Naive thymus-derived CD4-positive, alpha-beta T cell (primary cell): ENCODE measurements at regions of chr6 and their contacts with region 1.

Region 1: DNA sequence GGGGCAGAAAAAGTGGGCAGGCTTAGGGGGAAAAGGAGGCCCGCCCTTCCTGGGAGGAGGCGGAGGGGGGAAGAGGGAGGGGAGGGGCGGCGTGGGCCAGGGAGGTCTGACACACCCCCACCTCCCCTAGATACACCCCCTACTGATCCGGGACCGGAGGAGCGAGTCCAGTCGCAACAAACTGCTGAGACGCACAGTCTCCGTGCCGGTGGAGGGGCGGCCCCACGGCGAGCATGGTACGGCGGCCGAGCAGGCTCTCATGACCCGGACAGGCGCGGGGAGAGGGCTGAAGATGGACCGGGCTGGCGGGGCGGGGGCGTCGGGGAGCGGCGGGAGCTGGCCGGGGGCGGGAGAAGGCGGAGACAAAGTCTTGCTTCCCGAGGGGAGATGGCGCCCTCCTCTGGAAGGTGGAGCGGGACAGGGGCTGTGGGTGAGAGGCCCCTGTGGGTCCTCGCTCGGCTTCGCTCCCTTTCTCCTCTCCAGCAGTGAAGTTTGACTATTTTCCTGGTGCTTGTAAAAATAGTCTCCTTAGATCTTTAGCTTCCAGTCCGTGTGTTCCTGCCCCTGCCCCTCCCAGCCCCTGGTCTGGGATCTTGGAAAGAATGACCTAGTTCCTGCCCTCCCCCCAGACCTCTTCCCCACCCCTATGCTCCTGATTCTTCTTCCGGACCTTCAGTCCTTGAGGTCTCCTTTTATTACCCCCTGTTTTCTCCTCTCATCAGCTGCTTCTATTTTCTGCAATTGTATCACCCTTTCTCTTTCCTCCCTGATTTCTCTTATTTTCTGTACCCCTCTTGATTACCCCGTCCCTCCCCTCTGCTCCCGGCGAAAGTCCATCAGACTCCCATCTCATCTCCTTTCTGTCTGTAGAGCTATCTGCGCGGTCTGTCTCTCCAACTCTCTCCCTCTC is 6.1 kb downstream of the SYNGAP1 start:
- DNase-seq: peak; percentile 57 to 85 (median 74)
- ATAC-seq: peak; percentile 72
- H3K4me3 ChIP-seq: peak overlapping the region; percentile 73
- H3K4me3 Mint-ChIP-seq: peak overlapping the region; percentile 84 to 98 (median 95)
- H3K27ac ChIP-seq: peak overlapping the region; percentile 88
- H3K27ac Mint-ChIP-seq: peak overlapping the region; percentile 88 to 99 (median 95)
- H3K4me1 ChIP-seq: peaks cover 43 to 46% of the 10 kb centered on the region in 2 donors
- H3K4me1 Mint-ChIP-seq: peaks cover 64 to 89% (median 82%) of the 10 kb centered on the region in 7 donors
- H3K27me3 ChIP-seq: no peaks in the 10 kb centered on the region
- H3K27me3 Mint-ChIP-seq: no peaks in the 10 kb centered on the region

Region 2: DNA sequence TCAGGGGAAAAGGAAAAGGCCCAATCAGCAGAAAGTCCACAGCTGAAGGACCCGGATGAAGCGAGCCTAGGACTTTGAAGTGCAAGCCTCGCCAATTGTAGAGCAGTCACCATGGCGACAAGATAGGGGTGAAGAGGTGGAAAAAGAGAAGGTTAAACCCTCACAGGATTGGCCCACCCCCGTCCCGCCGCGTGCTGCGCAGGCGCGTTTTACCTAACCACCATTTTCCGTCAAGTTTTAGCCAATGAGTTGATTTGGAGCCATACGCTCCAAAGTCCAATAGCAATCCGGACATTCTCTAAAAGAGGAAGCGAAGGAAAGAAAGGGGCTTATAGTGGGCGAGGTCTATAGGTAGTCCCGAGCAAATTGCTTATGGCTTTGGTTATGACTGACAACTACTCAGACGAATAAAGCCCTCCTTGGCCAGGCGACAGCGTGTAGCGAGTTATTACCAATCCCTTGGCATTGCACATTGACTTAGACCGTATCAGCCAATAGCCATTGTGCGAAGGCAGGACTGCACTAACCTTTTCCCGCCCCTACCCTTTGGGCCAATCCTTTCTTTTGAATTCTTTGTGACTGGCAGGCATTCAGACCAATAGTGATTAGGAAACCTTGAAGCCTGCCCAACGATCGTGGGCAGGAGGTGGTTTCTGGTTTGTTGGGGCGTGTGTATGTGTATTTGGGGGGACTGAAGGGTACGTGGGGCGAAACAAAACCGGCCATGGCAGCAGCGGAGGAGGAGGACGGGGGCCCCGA is 1248.0 kb before region 1 on chr6 and contains the start of gene RNF5:
- CTCF ChIA-PET with region 1: no interaction called
- POLR2A ChIA-PET with region 1: no interaction called
- intact Hi-C with region 1: loop called in 1 of 2 experiments (anchors 5 kb)
- DNase-seq: peak; percentile 60 to 99 (median 97)
- ATAC-seq: peak; percentile 89
- H3K4me3 ChIP-seq: peak within 1 kb of the TSS; percentile 82
- H3K4me3 Mint-ChIP-seq: peak within 1 kb of the TSS; percentile 85 to 98 (median 95)
- H3K27ac ChIP-seq: peak within 1 kb of the TSS; percentile 91
- H3K27ac Mint-ChIP-seq: peak within 1 kb of the TSS; percentile 87 to 100 (median 95)
- H3K4me1 ChIP-seq: peaks cover 31 to 63% of the 10 kb centered on the region in 2 donors
- H3K4me1 Mint-ChIP-seq: peaks cover 63 to 86% (median 69%) of the 10 kb centered on the region in 7 donors
- H3K27me3 ChIP-seq: no peaks in the 10 kb centered on the region
- H3K27me3 Mint-ChIP-seq: no peaks in the 10 kb centered on the region
- total RNA-seq, gene RNF5: 17.0 to 50.6 (median 40.9) TPM

Region 3: DNA sequence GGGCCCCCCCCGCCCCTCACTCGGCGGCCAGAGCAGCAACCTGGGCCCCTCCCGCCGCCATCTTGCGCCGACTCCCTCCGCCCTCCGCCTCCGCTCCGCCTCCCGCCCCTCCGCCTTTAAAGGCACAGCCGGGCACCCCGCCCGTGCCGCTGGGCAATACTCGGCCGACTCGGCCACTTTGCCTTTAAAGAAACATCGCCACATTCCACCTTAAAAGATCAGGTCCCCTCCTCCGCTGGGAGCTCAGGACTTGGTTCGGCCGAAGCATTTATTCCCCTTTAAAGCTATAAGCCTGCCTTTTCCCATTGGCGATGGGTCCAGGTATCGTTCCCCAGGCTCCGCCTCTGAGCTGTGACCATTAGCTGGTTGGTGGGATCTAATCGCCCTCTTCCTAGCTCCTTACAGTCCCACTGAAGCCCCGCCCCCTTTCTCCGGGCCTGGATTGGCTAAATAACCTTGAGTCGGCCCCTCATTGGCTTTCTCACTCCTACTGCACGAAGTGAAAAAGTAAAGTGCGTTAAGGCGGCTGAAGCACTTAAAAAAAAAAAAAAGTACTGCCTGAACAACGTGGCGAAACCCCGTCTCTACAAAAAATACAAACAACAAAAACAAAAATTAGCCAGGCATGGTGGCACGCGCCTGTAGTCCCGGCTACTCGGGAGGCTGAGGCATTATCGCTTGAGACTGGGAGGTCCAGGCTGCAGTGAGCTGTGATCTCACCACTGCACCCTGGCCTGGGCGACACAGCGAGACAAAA is 108.1 kb before region 1 on chr6 and contains the start of gene ZBTB22:
- CTCF ChIA-PET with region 1: interaction called, 3 read pairs
- POLR2A ChIA-PET with region 1: interaction called, 12 read pairs
- intact Hi-C with region 1: loop called (anchors 1 to 5 kb)
- DNase-seq: peak; percentile 87 to 97 (median 96)
- ATAC-seq: peak; percentile 73
- H3K4me3 ChIP-seq: peak within 1 kb of the TSS; percentile 97
- H3K4me3 Mint-ChIP-seq: peak within 1 kb of the TSS; percentile 81 to 100 (median 100)
- H3K27ac ChIP-seq: peak within 1 kb of the TSS; percentile 99
- H3K27ac Mint-ChIP-seq: peak within 1 kb of the TSS; percentile 97 to 99 (median 98)
- H3K4me1 ChIP-seq: peaks cover 59 to 62% of the 10 kb centered on the region in 2 donors
- H3K4me1 Mint-ChIP-seq: peaks cover 53 to 85% (median 75%) of the 10 kb centered on the region in 7 donors
- H3K27me3 ChIP-seq: no peaks in the 10 kb centered on the region
- H3K27me3 Mint-ChIP-seq: peaks cover 0 to 2% (median 0%) of the 10 kb centered on the region in 5 donors
- total RNA-seq, gene ZBTB22: 15.5 to 30.1 (median 20.5) TPM

Region 4: GRCh38 chr6:33454009-33454946 is 28.4 kb after region 1 on chr6 and contains the start of gene ZBTB9:
- CTCF ChIA-PET with region 1: interaction called, 6 read pairs
- POLR2A ChIA-PET with region 1: interaction called, 37 read pairs
- intact Hi-C with region 1: loop called (anchors 1 kb)
- DNase-seq: peak; percentile 80 to 93 (median 92)
- ATAC-seq: peak; percentile 100
- H3K4me3 ChIP-seq: peak within 1 kb of the TSS; percentile 93
- H3K4me3 Mint-ChIP-seq: peak within 1 kb of the TSS; percentile 88 to 99 (median 95)
- H3K27ac ChIP-seq: peak within 1 kb of the TSS; percentile 88
- H3K27ac Mint-ChIP-seq: peak within 1 kb of the TSS; percentile 86 to 98 (median 92)
- H3K4me1 ChIP-seq: peaks cover 12 to 22% of the 10 kb centered on the region in 2 donors
- H3K4me1 Mint-ChIP-seq: peaks cover 21 to 57% (median 45%) of the 10 kb centered on the region in 7 donors
- H3K27me3 ChIP-seq: no peaks in the 10 kb centered on the region
- H3K27me3 Mint-ChIP-seq: no peaks in the 10 kb centered on the region
- total RNA-seq, gene ZBTB9: 3.3 to 14.0 (median 9.8) TPM

Region 5: GRCh38 chr6:33535104-33535603 is 109.2 kb after region 1 on chr6:
- CTCF ChIA-PET with region 1: no interaction called
- POLR2A ChIA-PET with region 1: interaction called, 9 read pairs
- intact Hi-C with region 1: loop called in 1 of 2 experiments (anchors 5 kb)
- DNase-seq: no peak
- ATAC-seq: no peak
- H3K4me3 ChIP-seq: no peak overlapping the region
- H3K4me3 Mint-ChIP-seq: no peak overlapping the region
- H3K27ac ChIP-seq: no peak overlapping the region
- H3K27ac Mint-ChIP-seq: peak overlapping the region in 3 of 9 donors; percentile 9 to 74 (median 50)
- H3K4me1 ChIP-seq: peaks cover 0 to 10% of the 10 kb centered on the region in 2 donors
- H3K4me1 Mint-ChIP-seq: peaks cover 9 to 32% (median 27%) of the 10 kb centered on the region in 7 donors
- H3K27me3 ChIP-seq: no peaks in the 10 kb centered on the region
- H3K27me3 Mint-ChIP-seq: peaks cover 0 to 2% (median 0%) of the 10 kb centered on the region in 5 donors

Region 6: DNA sequence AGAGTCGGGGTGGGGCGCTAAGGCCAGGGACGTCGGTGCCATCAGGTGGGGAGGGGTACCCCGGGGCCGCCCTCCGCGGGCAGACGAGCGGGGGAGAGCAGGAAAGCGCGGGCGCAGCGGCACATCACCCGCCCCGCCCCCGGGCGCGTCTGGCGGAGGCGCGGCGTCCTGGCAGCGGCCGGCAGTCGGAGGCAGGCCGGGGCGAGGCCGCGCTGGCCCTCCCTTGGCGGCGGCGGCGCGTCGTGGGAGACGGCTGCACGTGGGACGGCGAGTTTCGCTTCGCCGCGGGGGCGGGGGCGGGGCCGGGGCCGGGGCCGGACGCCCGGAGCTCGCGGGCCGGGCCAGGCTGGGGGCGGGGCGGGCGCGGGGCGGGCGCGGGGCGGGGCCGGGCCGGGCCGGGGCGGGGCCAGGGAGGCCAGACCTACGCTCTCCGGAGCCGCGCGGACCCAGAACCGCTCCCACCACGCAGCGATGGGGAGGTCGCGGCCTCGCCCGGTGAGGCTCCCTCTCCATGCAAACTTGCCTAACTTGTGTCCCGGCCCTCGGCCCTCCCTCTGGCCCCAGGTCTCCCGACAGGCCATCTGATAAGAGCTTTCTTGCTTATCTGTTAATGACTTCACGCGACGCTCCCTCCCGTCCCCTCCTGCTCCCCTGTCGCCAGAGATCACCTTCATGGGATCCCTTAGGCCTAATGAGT is 207.7 kb after region 1 on chr6:
- CTCF ChIA-PET with region 1: no interaction called
- POLR2A ChIA-PET with region 1: no interaction called
- intact Hi-C with region 1: loop called in 1 of 2 experiments (anchors 5 kb)
- DNase-seq: peak; percentile 30 to 77 (median 46)
- ATAC-seq: peak; percentile 88
- H3K4me3 ChIP-seq: peak overlapping the region; percentile 43
- H3K4me3 Mint-ChIP-seq: peak overlapping the region; percentile 87 to 94 (median 89)
- H3K27ac ChIP-seq: peak overlapping the region; percentile 56
- H3K27ac Mint-ChIP-seq: peak overlapping the region; percentile 46 to 89 (median 73)
- H3K4me1 ChIP-seq: peaks cover 20 to 32% of the 10 kb centered on the region in 2 donors
- H3K4me1 Mint-ChIP-seq: peaks cover 47 to 79% (median 70%) of the 10 kb centered on the region in 7 donors
- H3K27me3 ChIP-seq: no peaks in the 10 kb centered on the region
- H3K27me3 Mint-ChIP-seq: peaks cover 0 to 3% (median 0%) of the 10 kb centered on the region in 5 donors